CD14-positive monocyte (primary cell): ENCODE measurements at regions of chrX and their contacts with region 1.

Region 1: DNA sequence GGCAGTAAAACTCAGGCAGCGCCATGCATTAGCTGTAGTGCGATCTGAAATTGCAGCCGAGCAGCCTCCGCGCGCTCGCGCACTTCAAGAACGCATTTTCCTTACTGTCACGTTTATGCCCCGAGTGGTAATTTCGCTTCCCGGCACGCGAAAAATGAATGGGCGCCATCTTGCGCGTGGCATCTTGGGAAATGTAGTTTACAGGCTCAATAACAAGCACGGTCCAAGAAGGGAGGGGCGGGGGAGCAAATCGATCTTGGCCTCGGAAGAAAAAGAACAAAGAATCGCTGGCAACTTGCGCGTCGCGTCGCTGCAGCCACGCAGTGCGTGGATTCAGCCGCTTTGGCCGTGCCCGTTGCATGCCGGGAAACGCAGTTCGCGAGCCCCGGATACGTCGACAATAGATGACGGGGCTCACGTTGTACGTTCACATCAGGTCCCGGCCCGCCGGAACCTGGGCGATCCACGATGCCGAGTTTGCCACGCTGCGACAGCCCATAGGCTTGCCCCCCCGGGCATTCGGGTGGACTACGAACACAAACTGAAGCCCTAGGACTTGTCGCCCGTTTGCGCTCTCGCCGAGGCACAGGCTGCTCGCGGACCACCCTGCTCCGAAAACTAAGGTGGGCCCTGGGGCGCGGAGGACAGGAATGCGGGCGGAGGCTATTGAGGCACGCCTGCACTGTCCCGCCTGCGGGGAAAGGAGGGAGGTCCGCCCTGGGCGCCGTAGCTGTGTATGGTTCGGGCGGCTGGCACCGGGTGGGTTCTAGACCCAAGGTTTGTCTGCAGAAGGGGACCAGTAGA is at the start of gene FTSJ1:
- DNase-seq: peak; percentile 87 to 91 (median 91)
- H3K4me3 ChIP-seq: peak within 1 kb of the TSS; percentile 57 to 79 (median 78)
- H3K4me3 Mint-ChIP-seq: peak within 1 kb of the TSS; percentile 87 to 90
- H3K27ac ChIP-seq: peak within 1 kb of the TSS; percentile 76 to 87
- H3K27ac Mint-ChIP-seq: peak within 1 kb of the TSS; percentile 85 to 96 (median 90)
- H3K4me1 ChIP-seq: peaks cover 8 to 24% of the 10 kb centered on the region in 2 donors
- H3K4me1 Mint-ChIP-seq: peaks cover 19% of the 10 kb centered on the region
- H3K27me3 ChIP-seq: no peaks in the 10 kb centered on the region
- H3K27me3 Mint-ChIP-seq: peaks cover 0 to 8% (median 2%) of the 10 kb centered on the region in 3 donors
- CTCF ChIP-seq: no peak
- polyA plus RNA-seq, gene FTSJ1: 36.6 to 44.3 (median 40.4) TPM

Region 2: DNA sequence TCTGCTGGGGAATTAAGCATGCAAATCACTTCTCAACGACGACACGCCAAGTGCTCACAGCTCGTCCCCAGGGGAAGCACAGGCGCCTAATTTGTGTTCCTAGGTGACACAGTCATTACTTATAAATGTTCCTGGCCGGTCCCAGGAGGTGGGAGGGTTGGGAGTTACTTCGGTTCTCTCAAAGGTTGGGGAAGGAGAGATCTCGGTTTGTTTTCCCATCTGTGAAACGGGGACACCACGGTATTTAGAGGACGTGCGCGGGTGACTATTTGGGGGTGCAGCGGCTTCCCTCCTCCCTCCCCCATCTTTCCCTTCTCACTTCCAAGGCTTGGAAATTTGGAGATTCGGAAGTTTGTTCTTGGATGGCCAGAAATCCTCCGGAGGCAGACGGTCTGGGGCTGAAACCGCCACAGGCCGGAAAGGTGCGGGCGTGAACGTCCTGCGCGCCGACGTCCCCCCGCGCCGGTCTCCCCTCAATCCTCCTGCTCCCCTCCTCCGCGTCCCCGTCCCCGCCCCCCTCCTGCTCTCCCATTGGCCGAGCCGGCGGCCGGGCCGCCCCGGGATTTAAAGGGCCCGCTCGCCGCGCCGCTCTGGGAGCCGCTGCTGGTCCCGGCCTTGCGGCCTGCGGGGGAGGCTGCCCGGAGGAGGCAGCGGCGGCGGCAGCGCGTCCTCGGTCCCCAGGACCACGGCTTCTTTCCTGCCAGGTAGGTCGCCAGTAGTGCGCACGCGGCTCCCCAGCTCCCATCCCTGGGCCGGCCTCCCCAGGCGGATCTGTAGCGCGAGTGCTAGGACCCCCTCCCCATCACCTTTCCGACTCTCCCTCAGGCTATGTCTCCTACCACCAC is 32.6 kb after region 1 on chrX and contains the start of gene PORCN:
- intact Hi-C with region 1: loop called in 1 of 2 experiments (anchors 2 kb)
- DNase-seq: peak; percentile 38 to 53 (median 39)
- H3K4me3 ChIP-seq: peak within 1 kb of the TSS; percentile 68 to 76 (median 72)
- H3K4me3 Mint-ChIP-seq: peak within 1 kb of the TSS; percentile 87 to 89
- H3K27ac ChIP-seq: peak within 1 kb of the TSS; percentile 16 to 68
- H3K27ac Mint-ChIP-seq: peak within 1 kb of the TSS; percentile 43 to 93 (median 84)
- H3K4me1 ChIP-seq: peaks cover 11 to 12% of the 10 kb centered on the region in 2 donors
- H3K4me1 Mint-ChIP-seq: peaks cover 11% of the 10 kb centered on the region
- H3K27me3 ChIP-seq: no peaks in the 10 kb centered on the region
- H3K27me3 Mint-ChIP-seq: peaks cover 0 to 8% (median 3%) of the 10 kb centered on the region in 3 donors
- CTCF ChIP-seq: no peak
- polyA plus RNA-seq, gene PORCN: 7.5 to 10.5 (median 7.8) TPM

Region 3: GRCh38 chrX:48539345-48540027 is 63.5 kb after region 1 on chrX and contains the start of gene TBC1D25:
- intact Hi-C with region 1: loop called in 1 of 2 experiments (anchors 5 kb)
- DNase-seq: peak; percentile 96 to 98 (median 98)
- H3K4me3 ChIP-seq: peak within 1 kb of the TSS; percentile 54 to 71 (median 71)
- H3K4me3 Mint-ChIP-seq: peak within 1 kb of the TSS; percentile 80 to 85
- H3K27ac ChIP-seq: peak within 1 kb of the TSS; percentile 86 to 90
- H3K27ac Mint-ChIP-seq: peak within 1 kb of the TSS; percentile 89 to 96 (median 94)
- H3K4me1 ChIP-seq: peaks cover 19 to 30% of the 10 kb centered on the region in 2 donors
- H3K4me1 Mint-ChIP-seq: peaks cover 25% of the 10 kb centered on the region
- H3K27me3 ChIP-seq: no peaks in the 10 kb centered on the region
- H3K27me3 Mint-ChIP-seq: peaks cover 0 to 6% (median 2%) of the 10 kb centered on the region in 3 donors
- CTCF ChIP-seq: peak; percentile 50
- polyA plus RNA-seq, gene TBC1D25: 5.7 to 16.9 (median 6.6) TPM

Region 4: DNA sequence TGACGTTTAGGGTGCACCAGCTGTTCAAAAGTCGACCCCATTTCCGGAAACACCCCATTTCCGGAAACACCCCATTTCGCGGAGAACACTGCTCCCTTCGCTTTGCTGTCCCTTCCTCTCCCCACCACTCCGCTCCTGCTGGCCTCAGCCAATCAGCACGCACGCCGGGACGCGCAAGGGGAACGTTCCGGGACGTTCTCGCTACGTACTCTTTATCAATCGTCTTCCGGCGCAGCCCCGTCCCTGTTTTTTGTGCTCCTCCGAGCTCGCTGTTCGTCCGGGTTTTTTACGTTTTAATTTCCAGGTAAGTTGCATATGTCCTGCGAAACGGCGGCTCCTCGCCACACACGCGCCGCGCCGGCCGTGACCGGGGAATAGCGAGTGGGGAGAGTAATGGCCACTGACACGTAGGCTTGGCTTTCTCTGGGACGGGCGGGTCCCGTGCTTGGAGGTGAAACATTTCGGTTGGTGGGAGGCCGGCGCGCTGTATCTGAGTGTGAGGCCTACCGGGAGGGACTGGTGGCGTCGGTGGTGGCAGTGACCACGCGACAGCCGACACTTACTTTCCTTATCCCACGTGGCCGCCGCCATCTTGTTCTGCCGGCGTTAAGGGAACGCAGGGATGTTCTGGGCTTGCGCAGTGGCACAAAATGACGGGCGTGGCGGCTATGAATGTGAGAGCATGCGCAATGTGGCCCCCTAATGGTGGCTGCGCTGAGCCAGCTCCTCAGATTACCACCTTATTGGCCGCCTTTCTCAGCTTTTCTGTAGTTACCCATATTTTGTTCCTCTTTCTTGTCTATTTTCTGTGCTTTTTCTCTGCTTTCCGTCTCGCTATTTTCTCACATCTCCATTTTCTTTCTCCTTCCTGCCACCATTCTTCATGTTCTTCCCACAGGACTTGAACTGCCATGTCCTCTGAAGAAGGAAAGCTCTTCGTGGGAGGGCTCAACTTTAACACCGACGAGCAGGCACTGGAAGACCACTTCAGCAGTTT is 98.6 kb after region 1 on chrX and contains the start of gene RBM3:
- intact Hi-C with region 1: loop called in 1 of 2 experiments (anchors 10 kb)
- DNase-seq: peak; percentile 89 to 96 (median 95)
- H3K4me3 ChIP-seq: peak within 1 kb of the TSS; percentile 58 to 91 (median 82)
- H3K4me3 Mint-ChIP-seq: peak within 1 kb of the TSS; percentile 92 to 96
- H3K27ac ChIP-seq: peak within 1 kb of the TSS; percentile 99 to 100
- H3K27ac Mint-ChIP-seq: peak within 1 kb of the TSS; percentile 97 to 100 (median 100)
- H3K4me1 ChIP-seq: peaks cover 14 to 20% of the 10 kb centered on the region in 2 donors
- H3K4me1 Mint-ChIP-seq: peaks cover 16% of the 10 kb centered on the region
- H3K27me3 ChIP-seq: no peaks in the 10 kb centered on the region
- H3K27me3 Mint-ChIP-seq: peaks cover 0 to 3% (median 0%) of the 10 kb centered on the region in 3 donors
- CTCF ChIP-seq: peak; percentile 23
- polyA plus RNA-seq, gene RBM3: 187 to 302 (median 203) TPM

Region 5: DNA sequence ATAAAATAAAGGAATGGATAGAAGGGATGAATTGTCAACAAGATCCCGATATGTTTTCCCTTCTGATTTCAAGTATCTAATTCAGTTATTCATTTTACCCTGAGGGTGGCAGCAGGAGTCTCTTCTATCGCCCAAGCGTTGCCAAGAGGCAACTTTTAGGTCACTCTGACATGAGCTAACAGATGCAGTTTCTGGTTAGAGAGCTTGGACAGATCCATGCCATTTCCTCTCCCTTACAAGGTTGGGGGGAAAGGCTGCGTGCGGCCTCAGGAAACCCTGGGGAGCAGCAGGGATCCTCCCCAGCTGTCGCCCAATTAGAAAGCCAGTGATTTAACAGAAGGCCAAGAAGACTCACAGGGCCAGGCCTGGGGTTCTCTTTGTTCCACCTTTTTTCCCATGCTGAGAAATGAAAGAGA is 172.4 kb after region 1 on chrX:
- intact Hi-C with region 1: no loop called
- DNase-seq: peak; percentile 38 to 51 (median 47)
- H3K4me3 ChIP-seq: no peak overlapping the region
- H3K4me3 Mint-ChIP-seq: no peak overlapping the region
- H3K27ac ChIP-seq: no peak overlapping the region
- H3K27ac Mint-ChIP-seq: peak overlapping the region in 2 of 7 donors; percentile 54 to 73
- H3K4me1 ChIP-seq: no peaks in the 10 kb centered on the region
- H3K4me1 Mint-ChIP-seq: peaks cover 2% of the 10 kb centered on the region
- H3K27me3 ChIP-seq: no peaks in the 10 kb centered on the region
- H3K27me3 Mint-ChIP-seq: peaks cover 0 to 3% (median 2%) of the 10 kb centered on the region in 3 donors
- CTCF ChIP-seq: peak; percentile 56

Region 6: DNA sequence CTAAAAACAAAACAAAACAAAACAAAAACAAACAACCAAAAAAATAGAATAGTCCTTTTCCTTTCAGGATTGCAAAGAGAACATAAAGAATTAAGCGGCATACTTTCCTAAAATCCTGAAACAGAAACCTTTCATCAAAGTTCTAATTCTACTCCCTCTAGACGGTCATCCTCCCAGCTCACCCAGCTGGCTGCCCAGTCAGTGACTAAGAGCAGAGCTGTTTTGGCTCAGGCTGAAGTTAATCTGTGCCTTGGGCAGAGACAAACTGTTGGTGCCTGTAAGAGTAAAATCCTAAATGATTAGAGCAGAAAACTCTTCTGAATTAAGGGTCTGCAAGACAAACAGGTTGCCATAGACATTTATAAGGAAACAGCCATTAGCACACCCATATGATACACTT is 190.0 kb after region 1 on chrX:
- intact Hi-C with region 1: no loop called
- DNase-seq: no peak
- H3K4me3 ChIP-seq: no peak overlapping the region
- H3K4me3 Mint-ChIP-seq: no peak overlapping the region
- H3K27ac ChIP-seq: no peak overlapping the region
- H3K27ac Mint-ChIP-seq: no peak overlapping the region
- H3K4me1 ChIP-seq: peaks cover 16 to 20% of the 10 kb centered on the region in 2 donors
- H3K4me1 Mint-ChIP-seq: peaks cover 15% of the 10 kb centered on the region
- H3K27me3 ChIP-seq: no peaks in the 10 kb centered on the region
- H3K27me3 Mint-ChIP-seq: peaks cover 0 to 2% (median 2%) of the 10 kb centered on the region in 3 donors
- CTCF ChIP-seq: no peak